A549 (cell line): ENCODE measurements at regions of chr1 and their contacts with region 1.

Region 1: GRCh38 chr1:210448297-210448892 is 119.7 kb downstream of the HHAT start:
- DNase-seq: peak; percentile 36 to 58
- ATAC-seq: peak; percentile 59 to 90; a peak in 4 of 6 replicates
- H3K4me3 ChIP-seq: no peak overlapping the region
- H3K27ac ChIP-seq: peak overlapping the region; percentile 18 to 72; a peak in 4 of 6 replicates
- H3K4me1 ChIP-seq: peaks cover 30% of the 10 kb centered on the region
- CTCF ChIP-seq: peak; percentile 89
- EP300 ChIP-seq: no peak
- POLR2A ChIP-seq: no peak
- RAD21 ChIP-seq: peak; percentile 92

Region 2: DNA sequence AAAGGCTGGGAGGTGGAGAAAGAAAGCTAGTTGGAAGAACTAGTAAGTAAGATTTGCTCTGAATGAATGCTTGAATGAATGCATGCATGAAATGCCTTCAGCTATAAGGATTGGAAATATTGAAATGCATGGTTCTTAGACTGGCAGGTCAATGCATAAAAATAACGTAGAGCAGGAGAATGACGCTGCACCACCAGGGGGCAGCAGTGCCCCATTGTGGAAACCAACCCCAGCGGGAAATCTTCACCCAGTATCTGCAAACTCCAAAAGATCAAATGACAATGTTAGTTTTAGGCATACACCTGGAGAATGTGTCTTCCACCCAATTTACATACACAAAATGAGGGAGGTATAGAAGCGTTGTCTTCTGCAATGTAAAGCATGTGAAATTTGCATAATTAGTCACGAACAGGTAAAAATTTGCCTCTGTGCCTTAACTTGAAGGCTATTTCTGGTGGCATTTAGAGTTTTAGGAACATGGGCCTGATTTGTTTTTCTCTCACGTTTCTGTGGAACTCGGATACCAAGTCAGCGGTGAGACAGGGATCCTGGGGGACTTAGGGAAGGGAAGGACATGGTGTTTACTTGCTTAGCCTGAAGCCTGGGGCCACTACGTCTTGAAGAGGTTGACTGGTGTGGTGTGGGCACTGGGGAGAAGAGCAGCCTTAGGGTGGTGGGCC is 41.0 kb before region 1 on chr1:
- CTCF ChIA-PET with region 1: interaction called, 27 read pairs
- POLR2A ChIA-PET with region 1: no interaction called
- DNase-seq: peak; percentile 60 to 77
- ATAC-seq: peak; percentile 88 to 96; a peak in 5 of 6 replicates
- H3K4me3 ChIP-seq: no peak overlapping the region
- H3K27ac ChIP-seq: peak overlapping the region; percentile 29 to 74; a peak in 5 of 6 replicates
- H3K4me1 ChIP-seq: peaks cover 5% of the 10 kb centered on the region
- CTCF ChIP-seq: peak; percentile 98
- EP300 ChIP-seq: no peak
- POLR2A ChIP-seq: no peak
- RAD21 ChIP-seq: peak; percentile 96 to 98

Region 3: DNA sequence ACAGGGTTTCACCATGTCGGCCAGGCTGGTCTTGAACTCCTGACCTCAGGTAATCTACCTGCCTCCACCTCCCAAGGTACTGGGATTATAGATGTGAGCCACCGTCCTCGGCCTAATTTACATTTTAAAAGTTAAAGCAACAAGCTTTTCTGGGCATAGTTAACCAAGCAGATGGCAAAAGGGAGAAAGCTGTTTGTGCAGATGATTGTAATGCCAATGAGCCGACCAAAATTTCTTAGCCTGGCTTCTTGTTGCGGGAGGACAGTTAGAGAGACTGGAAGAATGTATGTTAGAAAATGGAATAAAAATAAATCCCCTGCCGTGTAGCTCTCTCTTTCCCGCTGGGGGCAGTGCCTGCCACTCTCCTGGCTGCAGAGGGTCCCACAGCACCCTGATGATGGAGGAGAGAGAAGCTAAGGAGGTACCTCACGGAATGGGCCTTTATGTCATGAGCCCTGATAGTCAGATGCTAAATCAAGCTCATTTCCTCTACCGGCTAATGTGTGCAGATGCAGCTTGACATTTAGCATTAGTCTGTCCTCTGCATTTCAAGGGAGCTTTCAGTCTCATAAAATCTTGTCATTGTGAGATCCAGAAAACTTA is 32.4 kb before region 1 on chr1:
- CTCF ChIA-PET with region 1: interaction called, 20 read pairs
- POLR2A ChIA-PET with region 1: no interaction called
- DNase-seq: no peak
- ATAC-seq: peak in 1 of 2 experiments; percentile 47; a peak in 2 of 6 replicates
- H3K4me3 ChIP-seq: no peak overlapping the region
- H3K27ac ChIP-seq: no peak overlapping the region
- H3K4me1 ChIP-seq: peaks cover 5% of the 10 kb centered on the region; the same call in 1 of the 3 replicates
- CTCF ChIP-seq: no peak
- EP300 ChIP-seq: no peak
- POLR2A ChIP-seq: no peak
- RAD21 ChIP-seq: no peak

Region 4: DNA sequence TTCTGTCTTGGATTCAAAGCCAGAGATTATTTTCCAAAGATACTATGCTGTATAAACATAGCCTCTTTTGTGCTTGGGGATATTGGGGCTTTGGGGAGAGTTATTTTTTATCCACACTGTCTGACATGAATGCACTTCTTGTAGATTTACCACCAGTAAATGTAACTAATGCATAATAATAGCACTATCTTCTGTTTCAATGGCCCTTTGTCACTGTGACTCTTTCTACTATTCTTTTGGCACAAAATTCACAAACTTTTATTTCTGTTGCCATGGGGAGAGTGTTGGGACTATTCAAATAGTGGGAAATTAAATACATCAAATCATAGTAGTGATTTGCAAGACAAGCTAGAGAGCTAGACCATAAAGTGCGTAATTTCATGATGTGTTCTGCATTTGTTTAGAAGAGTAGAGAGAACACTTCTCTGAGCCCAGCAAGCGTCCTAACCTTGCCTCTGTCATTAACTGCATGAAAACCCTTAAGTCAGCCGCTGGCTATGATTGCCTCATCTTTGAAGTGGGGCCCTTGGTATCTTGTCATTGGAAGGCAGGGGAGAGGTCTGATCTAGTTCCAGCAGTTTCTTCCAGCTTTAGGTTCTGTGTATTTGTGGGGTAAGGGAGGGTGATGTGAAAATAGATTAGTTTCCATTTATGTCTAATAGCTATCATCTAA is 34.7 kb after region 1 on chr1:
- CTCF ChIA-PET with region 1: interaction called, 11 read pairs
- POLR2A ChIA-PET with region 1: no interaction called
- DNase-seq: no peak
- ATAC-seq: no peak
- H3K4me3 ChIP-seq: no peak overlapping the region
- H3K27ac ChIP-seq: no peak overlapping the region
- H3K4me1 ChIP-seq: no peaks in the 10 kb centered on the region
- CTCF ChIP-seq: no peak
- EP300 ChIP-seq: no peak
- POLR2A ChIP-seq: no peak
- RAD21 ChIP-seq: no peak

Region 5: GRCh38 chr1:210669951-210670350 is 221.6 kb after region 1 on chr1:
- CTCF ChIA-PET with region 1: no interaction called
- POLR2A ChIA-PET with region 1: no interaction called
- DNase-seq: no peak
- ATAC-seq: no peak
- H3K4me3 ChIP-seq: no peak overlapping the region
- H3K27ac ChIP-seq: no peak overlapping the region
- H3K4me1 ChIP-seq: no peaks in the 10 kb centered on the region
- CTCF ChIP-seq: no peak
- EP300 ChIP-seq: no peak
- POLR2A ChIP-seq: no peak
- RAD21 ChIP-seq: no peak